Posterior vena cava (tissue), 2 donors: ENCODE measurements at regions of chr15 and their contacts with region 1.

Region 1: GRCh38 chr15:51380999-51381795 is 39.7 kb downstream of the GLDN start:
- DNase-seq: no peak

Region 2: GRCh38 chr15:51281368-51281967 is 99.7 kb before region 1 on chr15:
- intact Hi-C with region 1: loop called (anchors 5 kb)
- DNase-seq: peak; percentile 91